ENCODE measurements at regions of chr6 and their contacts with region 1.

Region 1: GRCh38 chr6:154276810-154277628 is 79.6 kb downstream of the IPCEF1 start:
- DNase-seq: peak; percentile 12
- ATAC-seq: peak; percentile 74
- H3K4me3 Mint-ChIP-seq: peak overlapping the region; percentile 57
- H3K27ac Mint-ChIP-seq: peak overlapping the region; percentile 79
- H3K4me1 Mint-ChIP-seq: peaks cover 39% of the 10 kb centered on the region
- H3K27me3 Mint-ChIP-seq: no peaks in the 10 kb centered on the region
- CTCF ChIP-seq: peak; percentile 66

Region 2: DNA sequence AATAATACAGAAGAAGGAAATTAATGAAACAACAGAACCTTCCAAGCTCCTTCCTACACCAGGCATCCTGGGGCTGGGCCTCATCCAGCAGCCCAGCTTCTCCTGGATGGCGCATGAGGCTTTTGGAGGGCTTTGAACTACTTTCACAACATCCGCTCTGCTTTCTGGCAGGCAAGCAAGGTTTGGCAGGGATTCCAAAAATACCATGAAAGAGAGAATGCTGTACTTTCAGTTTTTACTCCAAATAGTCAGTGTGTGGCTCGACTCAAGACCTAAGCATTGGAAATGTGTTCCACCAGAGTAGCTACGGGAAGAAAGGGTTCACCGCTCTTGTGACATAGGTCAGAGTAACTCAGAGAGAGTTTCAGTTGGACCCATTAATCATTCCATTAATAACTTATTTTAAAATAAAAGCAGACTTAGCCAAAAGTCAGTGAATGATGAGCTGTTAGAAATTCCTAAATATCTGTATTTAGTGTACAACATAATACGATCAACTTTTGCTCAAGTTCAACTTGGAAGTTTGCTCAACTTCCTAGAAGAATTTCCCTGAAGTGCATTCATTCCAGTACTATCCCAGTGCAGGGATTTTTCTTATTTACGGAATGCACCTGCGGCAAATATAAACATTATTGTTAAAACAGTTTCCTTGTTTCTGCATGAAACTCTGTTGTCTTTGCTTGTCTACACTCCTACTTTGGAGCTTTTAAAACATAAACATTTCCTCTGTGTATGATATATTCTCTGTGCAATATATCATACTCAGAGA is 112.4 kb before region 1 on chr6:
- CTCF ChIA-PET with region 1: interaction called, 36 read pairs
- POLR2A ChIA-PET with region 1: interaction called, 3 read pairs
- intact Hi-C with region 1: no loop called
- DNase-seq: no peak
- ATAC-seq: no peak
- H3K4me3 Mint-ChIP-seq: no peak overlapping the region
- H3K27ac Mint-ChIP-seq: peak overlapping the region; percentile 33
- H3K4me1 Mint-ChIP-seq: peaks cover 44% of the 10 kb centered on the region
- H3K27me3 Mint-ChIP-seq: no peaks in the 10 kb centered on the region
- CTCF ChIP-seq: no peak

Region 3: DNA sequence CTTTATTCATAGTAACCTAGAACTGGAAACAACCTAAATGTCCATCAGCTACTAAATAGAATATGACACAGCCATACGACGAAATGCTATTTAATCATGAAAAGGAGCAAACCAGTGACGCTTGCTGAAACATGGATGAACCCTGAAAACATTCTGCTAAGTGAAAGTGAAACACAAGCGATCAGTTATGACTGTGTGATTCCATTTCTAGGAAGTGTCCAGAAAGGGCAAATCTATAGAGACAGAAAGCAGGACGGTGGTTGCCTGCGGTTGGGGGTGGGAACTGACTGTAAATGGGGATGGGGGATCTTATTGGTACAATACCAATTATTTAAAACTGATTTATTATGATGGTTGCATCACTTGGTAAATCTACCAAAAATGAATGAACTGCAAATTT is 47.2 kb before region 1 on chr6:
- CTCF ChIA-PET with region 1: interaction called, 14 read pairs
- POLR2A ChIA-PET with region 1: interaction called, 10 read pairs
- intact Hi-C with region 1: no loop called
- DNase-seq: peak; percentile 83
- ATAC-seq: peak; percentile 70
- H3K4me3 Mint-ChIP-seq: peak overlapping the region; percentile 69
- H3K27ac Mint-ChIP-seq: peak overlapping the region; percentile 89
- H3K4me1 Mint-ChIP-seq: peaks cover 81% of the 10 kb centered on the region
- H3K27me3 Mint-ChIP-seq: no peaks in the 10 kb centered on the region
- CTCF ChIP-seq: no peak

Region 4: DNA sequence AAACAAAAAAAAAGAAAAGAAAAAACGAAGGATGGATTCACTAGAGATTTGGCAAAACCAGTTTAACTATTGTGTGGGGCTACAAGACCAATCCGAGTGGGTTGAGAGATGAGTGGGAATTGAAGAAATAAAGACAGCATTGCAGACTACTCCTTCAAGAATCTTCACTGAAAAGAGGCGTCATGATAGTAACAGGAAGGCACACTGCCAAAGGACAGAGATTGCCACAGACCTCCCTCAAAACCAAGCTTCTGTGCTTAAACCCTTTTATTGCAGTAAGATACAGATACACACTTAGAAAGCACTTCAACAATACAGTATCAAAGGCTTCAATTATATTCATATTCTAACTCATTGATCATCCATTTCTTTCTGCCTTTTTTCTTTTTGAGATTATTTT is 24.3 kb before region 1 on chr6:
- CTCF ChIA-PET with region 1: interaction called, 42 read pairs
- POLR2A ChIA-PET with region 1: interaction called, 4 read pairs
- intact Hi-C with region 1: loop called (anchors 2 kb)
- DNase-seq: no peak
- ATAC-seq: no peak
- H3K4me3 Mint-ChIP-seq: no peak overlapping the region
- H3K27ac Mint-ChIP-seq: peak overlapping the region; percentile 36
- H3K4me1 Mint-ChIP-seq: peaks cover 63% of the 10 kb centered on the region
- H3K27me3 Mint-ChIP-seq: no peaks in the 10 kb centered on the region
- CTCF ChIP-seq: no peak

Region 5: DNA sequence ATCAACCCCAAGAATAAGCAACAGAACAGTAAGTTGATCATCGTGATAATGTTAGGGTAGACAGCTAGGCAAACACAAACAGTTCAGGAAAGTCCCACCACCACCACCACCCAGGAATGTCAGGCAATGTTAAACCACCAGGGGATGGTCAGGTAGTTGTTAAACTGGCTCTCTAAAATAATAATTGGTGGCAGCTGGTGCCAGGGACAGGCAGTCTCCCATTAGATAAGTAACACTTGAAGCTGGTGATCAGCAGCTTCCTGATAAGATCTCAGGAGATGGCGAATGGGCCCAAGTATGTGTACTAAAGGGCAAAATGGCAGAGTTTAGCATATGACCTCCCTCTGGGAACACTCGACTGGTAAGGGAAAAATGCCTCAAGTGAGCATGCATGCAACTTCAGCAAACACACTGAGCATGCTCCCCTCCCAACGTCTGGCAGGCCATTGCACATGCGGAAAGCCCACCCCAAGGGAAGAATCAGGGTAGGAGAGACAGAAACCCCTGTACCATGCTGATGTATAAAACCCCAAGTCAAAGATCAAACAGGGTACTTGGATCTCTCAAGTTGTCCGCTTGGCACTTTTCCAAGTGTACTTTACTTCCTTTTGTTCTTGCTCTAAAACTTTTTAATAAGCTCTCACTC is 13.0 kb after region 1 on chr6:
- CTCF ChIA-PET with region 1: interaction called, 23 read pairs
- POLR2A ChIA-PET with region 1: no interaction called
- intact Hi-C with region 1: no loop called
- DNase-seq: no peak
- ATAC-seq: no peak
- H3K4me3 Mint-ChIP-seq: no peak overlapping the region
- H3K27ac Mint-ChIP-seq: no peak overlapping the region
- H3K4me1 Mint-ChIP-seq: peaks cover 9% of the 10 kb centered on the region
- H3K27me3 Mint-ChIP-seq: no peaks in the 10 kb centered on the region
- CTCF ChIP-seq: no peak

Region 6: GRCh38 chr6:154359161-154359574 is 82.1 kb after region 1 on chr6:
- CTCF ChIA-PET with region 1: interaction called, 15 read pairs
- POLR2A ChIA-PET with region 1: no interaction called
- intact Hi-C with region 1: no loop called
- DNase-seq: no peak
- ATAC-seq: peak; percentile 48
- H3K4me3 Mint-ChIP-seq: peak overlapping the region; percentile 35
- H3K27ac Mint-ChIP-seq: no peak overlapping the region
- H3K4me1 Mint-ChIP-seq: peaks cover 43% of the 10 kb centered on the region
- H3K27me3 Mint-ChIP-seq: peaks cover 8% of the 10 kb centered on the region
- CTCF ChIP-seq: no peak

Measured in activated CD8-positive, alpha-beta T cell treated with anti-CD3 and anti-CD28 coated beads for 36 hours (primary cell).